Endothelial cell of umbilical vein (primary cell): ENCODE measurements at regions of chr1 and their contacts with region 1.

Region 1: DNA sequence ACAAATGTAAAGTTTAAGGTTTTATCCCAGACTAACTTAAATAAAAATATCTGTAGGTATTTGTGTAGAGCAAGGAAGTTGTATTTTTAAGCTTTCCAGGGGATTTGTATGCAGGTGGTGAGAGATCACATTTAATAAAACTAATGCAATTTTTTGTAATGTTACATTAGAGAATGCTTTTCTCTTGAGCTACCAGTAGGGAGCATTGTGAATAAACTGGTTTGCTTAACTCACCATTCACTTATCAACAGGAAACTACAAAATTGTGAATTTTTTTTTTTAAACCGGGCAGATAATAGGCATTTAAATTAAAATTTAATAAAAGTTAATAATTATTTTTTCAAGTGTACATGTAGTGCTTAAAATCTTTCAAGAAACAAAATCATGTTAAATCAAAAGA is 78.6 kb downstream of the IVNS1ABP start:
- DNase-seq: no peak
- H3K4me3 ChIP-seq: no peak overlapping the region
- H3K27ac ChIP-seq: no peak overlapping the region
- H3K4me1 ChIP-seq: no peaks in the 10 kb centered on the region
- H3K27me3 ChIP-seq: no peaks in the 10 kb centered on the region
- CTCF ChIP-seq: peak in 1 of 2 donors; percentile 27
- POLR2A ChIP-seq: no peak

Region 2: GRCh38 chr1:185227161-185227560 is 11.3 kb before region 1 on chr1:
- CTCF ChIA-PET with region 1: interaction called, 17 read pairs
- POLR2A ChIA-PET with region 1: no interaction called
- dilution Hi-C with region 1: no loop called
- intact Hi-C with region 1: no loop called
- DNase-seq: no peak
- H3K4me3 ChIP-seq: no peak overlapping the region
- H3K27ac ChIP-seq: no peak overlapping the region
- H3K4me1 ChIP-seq: no peaks in the 10 kb centered on the region
- H3K27me3 ChIP-seq: no peaks in the 10 kb centered on the region
- CTCF ChIP-seq: no peak
- POLR2A ChIP-seq: no peak

Region 3: GRCh38 chr1:185249563-185249962 is 11.1 kb after region 1 on chr1:
- CTCF ChIA-PET with region 1: interaction called, 14 read pairs
- POLR2A ChIA-PET with region 1: no interaction called
- dilution Hi-C with region 1: no loop called
- intact Hi-C with region 1: no loop called
- DNase-seq: peak; percentile 4
- H3K4me3 ChIP-seq: no peak overlapping the region
- H3K27ac ChIP-seq: no peak overlapping the region
- H3K4me1 ChIP-seq: no peaks in the 10 kb centered on the region
- H3K27me3 ChIP-seq: no peaks in the 10 kb centered on the region
- CTCF ChIP-seq: no peak
- POLR2A ChIP-seq: no peak

Region 4: GRCh38 chr1:185404291-185404690 is 165.8 kb after region 1 on chr1:
- CTCF ChIA-PET with region 1: no interaction called
- POLR2A ChIA-PET with region 1: no interaction called
- dilution Hi-C with region 1: no loop called
- intact Hi-C with region 1: no loop called
- DNase-seq: peak; percentile 33
- H3K4me3 ChIP-seq: no peak overlapping the region
- H3K27ac ChIP-seq: no peak overlapping the region
- H3K4me1 ChIP-seq: no peaks in the 10 kb centered on the region
- H3K27me3 ChIP-seq: no peaks in the 10 kb centered on the region
- CTCF ChIP-seq: no peak
- POLR2A ChIP-seq: no peak

Region 5: GRCh38 chr1:185670187-185670627 is 431.8 kb after region 1 on chr1:
- CTCF ChIA-PET with region 1: interaction called, 40 read pairs
- POLR2A ChIA-PET with region 1: no interaction called
- dilution Hi-C with region 1: no loop called
- intact Hi-C with region 1: loop called (anchors 2 kb)
- DNase-seq: peak; percentile 74
- H3K4me3 ChIP-seq: no peak overlapping the region
- H3K27ac ChIP-seq: no peak overlapping the region
- H3K4me1 ChIP-seq: peaks cover 17% of the 10 kb centered on the region
- H3K27me3 ChIP-seq: no peaks in the 10 kb centered on the region
- CTCF ChIP-seq: peak; percentile 44 to 57
- POLR2A ChIP-seq: no peak